Posterior vena cava (tissue), 2 donors: ENCODE measurements at regions of chr1 and their contacts with region 1.

Region 1: GRCh38 chr1:70546726-70547125 is 135.7 kb downstream of the CTH start:
- DNase-seq: no peak

Region 2: DNA sequence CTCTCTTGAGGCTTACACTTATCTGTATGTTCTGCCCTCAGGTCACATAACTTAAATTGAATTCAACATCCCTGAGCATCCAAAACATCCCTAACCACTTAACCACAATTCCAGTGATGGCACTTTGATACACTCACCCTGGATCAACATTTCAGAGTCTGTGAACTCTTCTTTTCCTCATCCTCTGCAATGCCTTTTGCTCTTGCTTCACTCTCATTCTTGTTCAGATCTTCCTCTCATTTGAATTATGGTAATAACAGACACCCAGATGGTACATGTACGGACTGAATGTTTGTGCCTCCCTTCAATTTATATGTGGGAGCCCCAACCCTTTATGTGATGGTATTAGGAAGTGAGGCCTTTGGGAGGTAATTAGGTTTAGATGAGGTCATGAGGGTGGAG is 467.5 kb after region 1 on chr1:
- intact Hi-C with region 1: no loop called
- DNase-seq: no peak

Region 3: DNA sequence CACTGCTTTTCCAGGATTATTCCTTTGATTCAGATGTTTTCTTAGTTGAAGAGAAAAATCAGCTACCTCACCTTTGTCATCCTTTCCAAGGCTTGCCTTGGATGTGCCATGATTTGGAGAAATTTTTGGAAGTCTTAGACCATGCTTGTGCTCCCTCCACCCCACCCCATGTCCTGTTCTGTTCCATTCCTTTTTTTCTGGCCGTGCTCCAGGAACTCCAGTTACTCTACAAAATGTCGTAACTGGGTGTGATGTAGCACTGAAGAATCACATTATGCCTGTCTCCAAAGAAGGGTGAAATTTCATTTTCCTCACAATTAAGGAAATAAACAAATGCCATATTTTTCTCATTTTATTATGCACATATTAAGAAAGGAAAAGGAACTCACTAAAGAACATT is 751.9 kb after region 1 on chr1:
- intact Hi-C with region 1: loop called in 1 of 2 experiments (anchors 5 kb)
- DNase-seq: no peak

Region 4: DNA sequence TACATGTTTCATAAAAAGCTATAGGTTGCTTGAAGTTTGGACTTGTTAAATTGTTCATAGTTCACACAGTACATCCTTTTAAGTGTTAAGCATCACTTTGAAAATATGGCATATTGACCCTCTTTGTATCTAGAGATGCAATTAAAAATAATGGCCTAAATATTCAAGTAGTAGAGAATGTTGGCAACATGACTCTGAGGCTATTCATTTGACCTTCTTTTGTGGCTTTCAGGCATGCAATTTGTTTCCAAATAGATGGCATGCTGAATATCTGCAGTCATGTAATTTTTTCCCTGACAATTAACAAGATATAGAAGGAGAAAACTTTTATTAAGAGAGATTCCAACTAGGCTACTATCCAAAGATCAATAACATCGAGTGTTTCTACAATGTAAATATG is 764.6 kb after region 1 on chr1:
- intact Hi-C with region 1: no loop called
- DNase-seq: no peak